Common myeloid progenitor, CD34-positive (primary cell): ENCODE measurements at regions of chr7 and their contacts with region 1.

Region 1: GRCh38 chr7:32891800-32892520 is 400 bp upstream of the KBTBD2 start:
- DNase-seq: peak; percentile 94 to 97 (median 97)
- H3K4me3 ChIP-seq: peak overlapping the region; percentile 81 to 98 (median 92)
- H3K27ac ChIP-seq: peak overlapping the region; percentile 93 to 98
- H3K4me1 ChIP-seq: peaks cover 25 to 51% (median 32%) of the 10 kb centered on the region in 4 experiments
- H3K27me3 ChIP-seq: no peaks in the 10 kb centered on the region

Region 2: GRCh38 chr7:32905175-32905662 is 13.3 kb after region 1 on chr7:
- CTCF ChIA-PET with region 1: interaction called, 15 read pairs
- POLR2A ChIA-PET with region 1: interaction called, 6 read pairs
- DNase-seq: peak; percentile 90 to 96 (median 95)
- H3K4me3 ChIP-seq: peak overlapping the region in 6 of 7 experiments; percentile 16 to 73 (median 45)
- H3K27ac ChIP-seq: peak overlapping the region in 1 of 2 experiments; percentile 76
- H3K4me1 ChIP-seq: peaks cover 0 to 8% (median 0%) of the 10 kb centered on the region in 4 experiments
- H3K27me3 ChIP-seq: no peaks in the 10 kb centered on the region